ENCODE measurements at regions of chr11 and their contacts with region 1.

Region 1: DNA sequence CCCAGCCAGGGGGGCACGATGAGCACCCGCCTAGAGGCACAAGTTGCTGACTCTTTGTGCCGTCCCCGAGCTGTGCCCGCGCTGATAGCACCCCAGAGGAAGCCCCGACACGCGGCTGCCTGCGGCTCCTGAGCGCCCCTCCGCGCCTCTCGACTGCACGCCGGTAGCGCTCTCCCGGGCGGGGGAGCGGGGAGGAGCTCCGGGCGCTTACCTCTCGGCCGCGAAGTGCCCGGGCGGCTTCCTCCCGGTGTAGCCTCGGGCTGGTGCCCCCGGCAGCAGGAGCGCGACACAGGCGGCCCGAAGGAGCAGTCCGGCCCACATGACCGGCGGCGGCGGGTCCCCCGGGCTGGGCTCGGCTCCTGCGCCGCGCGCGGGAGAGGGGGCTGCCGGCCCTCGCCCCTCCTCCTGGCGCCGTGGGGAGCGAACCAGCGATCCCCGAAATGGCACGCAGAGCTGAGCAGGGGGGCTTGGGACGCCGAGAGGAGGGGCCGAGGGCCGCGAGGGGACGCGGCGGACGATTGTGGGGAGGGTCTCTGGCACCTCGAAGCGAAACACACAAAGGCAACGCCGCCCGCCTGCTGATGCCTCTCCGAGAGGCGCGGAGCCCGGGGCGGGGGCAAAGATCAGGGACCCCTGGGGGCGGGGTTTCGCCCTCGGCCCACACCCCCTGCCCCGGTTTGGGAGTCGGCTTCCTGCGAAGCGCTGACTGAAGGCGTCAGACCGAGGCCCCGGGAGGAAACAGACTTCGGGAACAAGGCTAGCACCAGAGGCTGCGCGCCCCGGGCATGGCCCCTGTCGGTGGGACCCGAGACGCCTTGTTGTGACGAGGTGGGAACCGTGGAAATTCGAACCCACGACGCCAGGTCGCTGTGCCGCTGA is at the start of gene VWCE:
- DNase-seq: peak; percentile 75
- ATAC-seq: peak; percentile 66
- H3K4me3 Mint-ChIP-seq: peak within 1 kb of the TSS; percentile 85
- H3K27ac Mint-ChIP-seq: no peak within 1 kb of the TSS
- H3K4me1 Mint-ChIP-seq: peaks cover 26% of the 10 kb centered on the region
- H3K27me3 Mint-ChIP-seq: peaks cover 17% of the 10 kb centered on the region
- CTCF ChIP-seq: no peak
- total RNA-seq, gene VWCE: 13.8 to 21.9 TPM (median 17.4 TPM) in 3 replicates

Region 2: DNA sequence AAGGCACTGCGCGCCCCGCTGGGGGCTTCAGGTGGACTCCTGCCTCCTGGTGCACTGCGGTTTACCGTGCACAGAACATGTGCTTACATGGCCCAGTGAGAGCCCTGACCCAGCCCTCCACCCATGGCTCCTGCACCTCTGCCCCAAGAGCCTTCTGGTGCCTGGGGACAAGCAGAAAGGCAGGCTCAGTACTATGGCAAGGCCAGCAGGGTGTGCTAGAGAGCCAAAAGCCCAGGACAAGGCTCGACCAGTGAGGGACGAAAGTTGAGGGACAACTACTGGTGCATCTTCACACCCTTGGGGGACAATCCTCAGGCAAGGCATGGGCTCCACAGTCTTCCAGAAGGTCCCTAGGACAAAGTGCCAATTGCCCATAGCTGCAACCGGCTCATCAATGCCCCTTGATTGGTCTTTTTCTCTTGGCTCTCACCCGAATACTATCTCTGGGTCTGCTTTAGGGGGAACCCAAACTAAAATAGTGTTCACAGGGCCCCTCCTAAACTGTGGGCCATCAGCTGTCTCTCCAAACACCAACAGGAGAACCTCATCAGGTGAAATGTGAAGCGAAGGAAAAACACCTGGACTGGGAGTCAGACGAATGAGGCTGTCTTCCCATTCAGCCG is 40.4 kb before region 1 on chr11:
- CTCF ChIA-PET with region 1: interaction called, 12 read pairs
- POLR2A ChIA-PET with region 1: no interaction called
- DNase-seq: peak; percentile 85
- ATAC-seq: peak; percentile 97
- H3K4me3 Mint-ChIP-seq: no peak overlapping the region
- H3K27ac Mint-ChIP-seq: no peak overlapping the region
- H3K4me1 Mint-ChIP-seq: 0 out of 2 replicates have a peak, but pooled peaks cover 3% of the 10 kb centered on the region
- H3K27me3 Mint-ChIP-seq: no peaks in the 10 kb centered on the region
- CTCF ChIP-seq: peak; percentile 77

Region 3: GRCh38 chr11:61281581-61282250 is 13.2 kb before region 1 on chr11:
- CTCF ChIA-PET with region 1: interaction called, 20 read pairs
- POLR2A ChIA-PET with region 1: interaction called, 7 read pairs
- DNase-seq: peak; percentile 91
- ATAC-seq: peak; percentile 96
- H3K4me3 Mint-ChIP-seq: peak overlapping the region; percentile 33; the same call in 1 of the 2 replicates
- H3K27ac Mint-ChIP-seq: no peak overlapping the region
- H3K4me1 Mint-ChIP-seq: peaks cover 31% of the 10 kb centered on the region
- H3K27me3 Mint-ChIP-seq: peaks cover 2% of the 10 kb centered on the region; the same call in 1 of the 2 replicates
- CTCF ChIP-seq: no peak

Region 4: GRCh38 chr11:61315260-61315659 is 20.3 kb after region 1 on chr11:
- CTCF ChIA-PET with region 1: no interaction called
- POLR2A ChIA-PET with region 1: no interaction called
- DNase-seq: no peak
- ATAC-seq: no peak
- H3K4me3 Mint-ChIP-seq: no peak overlapping the region
- H3K27ac Mint-ChIP-seq: no peak overlapping the region
- H3K4me1 Mint-ChIP-seq: no peaks in the 10 kb centered on the region
- H3K27me3 Mint-ChIP-seq: no peaks in the 10 kb centered on the region
- CTCF ChIP-seq: no peak

Measured in WTC11 (cell line).